Aorta (tissue), 5 donors: ENCODE measurements at regions of chr6 and their contacts with region 1.

Region 1: GRCh38 chr6:163413345-163414116 is 987 bp upstream of the QKI start:
- DNase-seq: peak; percentile 92 to 96
- ATAC-seq: peak; percentile 95
- H3K4me3 ChIP-seq: peak overlapping the region; percentile 14 to 87
- H3K27ac ChIP-seq: peak overlapping the region; percentile 60 to 99
- H3K4me1 ChIP-seq: no peaks in the 10 kb centered on the region
- H3K27me3 ChIP-seq: no peaks in the 10 kb centered on the region

Region 2: DNA sequence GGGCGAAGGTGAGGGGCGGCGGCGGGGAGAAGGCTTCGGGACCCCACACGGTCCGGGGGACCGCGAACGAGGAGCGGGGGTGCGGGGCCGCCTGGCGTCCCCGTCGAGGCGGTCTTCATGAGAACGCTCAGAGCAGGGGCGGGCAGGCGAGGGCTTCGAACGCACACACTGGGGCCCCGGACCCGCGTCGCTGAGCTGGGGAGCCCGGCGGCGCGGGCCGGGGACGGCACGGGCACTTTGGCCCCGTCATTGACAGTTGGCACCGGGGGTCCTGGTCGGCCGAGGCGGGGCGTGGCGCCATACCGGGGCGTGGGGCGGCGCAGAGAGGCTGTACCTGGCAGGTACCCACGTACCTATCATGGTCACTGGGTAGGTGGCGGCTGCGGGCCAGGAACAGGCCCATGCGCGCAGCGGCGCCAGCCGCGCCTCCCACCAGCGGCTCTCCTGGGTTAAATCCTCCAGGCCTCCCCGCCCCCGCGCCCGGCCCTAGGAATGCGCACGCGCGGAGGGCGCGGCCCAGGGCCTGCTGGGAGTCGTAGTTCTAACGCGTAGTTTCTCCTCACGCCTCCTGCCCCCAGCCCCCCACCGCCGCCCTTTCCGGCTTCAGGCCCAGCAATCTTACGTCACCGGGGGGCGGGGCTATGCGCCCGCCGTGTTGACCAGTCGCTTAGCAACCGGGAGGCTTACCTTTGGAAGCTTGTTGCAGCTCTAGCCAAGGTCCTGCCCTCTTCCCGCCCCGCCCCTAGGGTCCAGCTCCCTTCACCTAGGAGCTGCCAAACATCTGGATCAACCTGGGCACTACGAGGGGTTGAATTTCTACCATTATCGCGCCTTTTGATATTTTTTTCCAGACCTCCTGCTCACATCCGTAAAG is 686.0 kb before region 1 on chr6 and contains the starts of genes PACRG and PRKN:
- intact Hi-C with region 1: loop called in 1 of 2 experiments (anchors 10 kb)
- DNase-seq: peak; percentile 99 to 100
- ATAC-seq: peak; percentile 100
- H3K4me3 ChIP-seq: peak within 1 kb of the TSS; percentile 58 to 79
- H3K27ac ChIP-seq: no peak within 1 kb of the TSS
- H3K4me1 ChIP-seq: no peaks in the 10 kb centered on the region
- H3K27me3 ChIP-seq: no peaks in the 10 kb centered on the region
- total RNA-seq, gene PACRG: 0.26 to 0.54 TPM
- total RNA-seq, gene PRKN: 9.0 to 17.3 TPM

Region 3: GRCh38 chr6:163180874-163181541 is 232.5 kb before region 1 on chr6:
- intact Hi-C with region 1: loop called in 1 of 2 experiments (anchors 10 kb)
- DNase-seq: peak in 1 of 2 donors; percentile 82
- ATAC-seq: peak; percentile 64
- H3K4me3 ChIP-seq: no peak overlapping the region
- H3K27ac ChIP-seq: no peak overlapping the region
- H3K4me1 ChIP-seq: no peaks in the 10 kb centered on the region
- H3K27me3 ChIP-seq: no peaks in the 10 kb centered on the region

Region 4: DNA sequence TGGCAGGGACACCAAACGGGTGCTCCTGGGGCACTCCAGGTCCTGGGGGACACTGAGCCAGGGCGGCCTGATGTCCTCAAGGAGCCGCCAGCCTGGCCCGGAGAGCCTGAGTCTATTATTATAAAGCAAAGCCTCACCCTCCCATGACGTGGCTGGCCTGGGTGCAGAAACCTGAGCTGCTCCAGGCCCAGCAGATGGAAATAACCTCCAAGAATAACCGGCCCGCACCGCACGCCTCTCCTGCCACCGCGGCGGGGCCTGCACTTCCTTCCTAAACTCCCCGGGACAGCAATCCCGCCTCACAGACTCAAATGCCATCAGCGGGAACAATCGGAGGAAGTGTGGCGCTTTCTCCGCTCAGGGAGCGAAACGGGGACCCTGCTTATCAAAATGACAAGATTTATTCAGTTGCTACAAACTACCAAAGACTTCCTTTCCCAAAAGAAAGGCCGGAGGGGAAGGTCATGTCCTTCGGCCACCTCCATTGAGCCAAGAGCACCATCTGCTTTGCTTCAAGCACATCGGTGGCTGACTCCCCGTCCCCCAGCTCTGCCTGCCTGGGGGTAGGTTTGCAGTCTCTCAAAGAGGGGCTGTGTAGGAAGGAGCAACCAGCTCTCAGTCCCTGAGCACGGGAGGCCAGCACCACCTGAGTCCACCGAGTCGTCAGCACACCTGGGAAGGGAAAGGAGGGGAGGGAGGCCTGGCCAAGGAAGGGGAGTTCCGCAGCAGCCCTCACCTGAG is 77.7 kb before region 1 on chr6:
- intact Hi-C with region 1: loop called in 1 of 2 experiments (anchors 1 kb)
- DNase-seq: peak; percentile 87 to 88
- ATAC-seq: peak; percentile 87
- H3K4me3 ChIP-seq: no peak overlapping the region
- H3K27ac ChIP-seq: peak overlapping the region in 1 of 2 donors; percentile 69
- H3K4me1 ChIP-seq: no peaks in the 10 kb centered on the region
- H3K27me3 ChIP-seq: no peaks in the 10 kb centered on the region

Region 5: DNA sequence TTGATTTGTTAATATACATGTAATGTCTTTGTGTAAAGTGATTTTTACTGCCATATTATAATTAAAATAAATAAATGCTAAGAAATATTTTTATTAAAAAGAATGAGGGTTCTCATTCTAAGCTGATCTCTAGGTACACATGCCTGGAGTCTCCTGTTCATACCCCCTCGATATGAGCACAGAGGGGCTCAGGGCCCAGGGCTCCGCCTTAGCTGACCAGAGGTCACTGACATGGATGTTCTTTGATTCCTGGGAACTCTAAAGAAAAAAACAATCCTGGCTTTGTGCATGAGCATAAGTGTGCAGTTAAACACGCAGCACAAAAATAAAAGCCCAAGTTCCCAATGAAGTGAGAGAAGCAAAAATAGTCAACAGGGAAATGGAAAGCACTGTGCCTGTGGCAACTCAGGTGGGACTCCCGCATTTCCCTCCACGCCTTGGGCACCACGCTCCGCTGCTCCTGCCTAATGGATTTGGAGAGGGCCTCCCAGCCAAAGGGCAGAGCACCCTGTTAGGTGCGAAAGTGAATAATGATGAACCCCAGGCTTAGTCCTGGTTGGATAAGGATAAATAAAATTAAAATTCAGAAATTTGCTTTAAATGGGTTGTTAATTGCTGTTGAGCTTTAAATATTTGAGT is 32.3 kb before region 1 on chr6:
- intact Hi-C with region 1: no loop called
- DNase-seq: no peak
- ATAC-seq: no peak
- H3K4me3 ChIP-seq: no peak overlapping the region
- H3K27ac ChIP-seq: no peak overlapping the region
- H3K4me1 ChIP-seq: no peaks in the 10 kb centered on the region
- H3K27me3 ChIP-seq: no peaks in the 10 kb centered on the region

Region 6: GRCh38 chr6:163460307-163460782 is 46.8 kb after region 1 on chr6:
- intact Hi-C with region 1: no loop called
- DNase-seq: no peak
- ATAC-seq: peak; percentile 51
- H3K4me3 ChIP-seq: peak overlapping the region; percentile 26 to 46
- H3K27ac ChIP-seq: no peak overlapping the region
- H3K4me1 ChIP-seq: peaks cover 5 to 10% of the 10 kb centered on the region in 2 donors
- H3K27me3 ChIP-seq: no peaks in the 10 kb centered on the region

Region 7: GRCh38 chr6:163533443-163533842 is 119.9 kb after region 1 on chr6:
- intact Hi-C with region 1: loop called in 1 of 2 experiments (anchors 10 kb)
- DNase-seq: no peak
- ATAC-seq: no peak
- H3K4me3 ChIP-seq: no peak overlapping the region
- H3K27ac ChIP-seq: no peak overlapping the region
- H3K4me1 ChIP-seq: peaks cover 3 to 13% of the 10 kb centered on the region in 2 donors
- H3K27me3 ChIP-seq: no peaks in the 10 kb centered on the region

Region 8: DNA sequence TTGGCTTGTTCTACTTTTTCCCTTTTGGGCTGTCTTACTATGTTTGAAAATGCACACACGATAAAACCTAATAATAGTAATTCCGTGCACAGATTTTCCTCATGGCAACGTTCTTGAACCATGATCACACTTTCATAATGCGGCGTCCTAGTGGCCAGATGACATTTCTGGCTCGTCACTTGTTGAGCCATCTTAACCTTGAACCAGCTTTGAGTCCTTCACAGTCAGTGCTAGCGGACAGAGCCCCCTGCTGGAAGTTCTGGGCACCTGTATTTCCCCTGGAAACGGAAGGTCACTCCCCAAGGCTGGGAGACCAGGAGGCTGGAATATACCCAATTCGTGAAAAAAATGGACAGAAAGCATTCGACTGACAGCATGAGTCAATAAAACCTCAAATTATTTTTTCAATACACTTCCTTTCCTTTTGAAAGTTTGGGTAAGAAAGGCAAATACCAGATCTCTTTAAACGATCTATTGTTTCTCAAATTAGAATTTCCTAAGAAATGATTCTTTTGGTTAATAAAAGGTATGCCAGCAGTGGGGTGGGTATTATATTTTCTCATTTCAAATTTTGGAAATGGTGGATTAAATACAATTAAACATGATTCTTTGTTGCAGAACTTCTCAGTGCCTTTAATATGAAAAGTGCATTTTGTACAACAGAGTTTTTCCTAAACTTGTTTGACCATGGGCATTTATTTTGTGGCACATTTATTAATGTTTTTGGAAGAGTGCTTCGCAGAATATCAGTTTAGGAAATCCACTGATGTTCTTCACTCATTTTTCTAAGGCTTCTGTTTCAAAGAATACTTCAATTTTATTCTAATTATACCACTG is 543.3 kb after region 1 on chr6:
- intact Hi-C with region 1: loop called in 1 of 2 experiments (anchors 10 kb)
- DNase-seq: peak; percentile 82 to 89
- ATAC-seq: peak; percentile 85
- H3K4me3 ChIP-seq: no peak overlapping the region
- H3K27ac ChIP-seq: no peak overlapping the region
- H3K4me1 ChIP-seq: no peaks in the 10 kb centered on the region
- H3K27me3 ChIP-seq: no peaks in the 10 kb centered on the region

Region 9: GRCh38 chr6:164085091-164086075 is 671.9 kb after region 1 on chr6:
- intact Hi-C with region 1: loop called in 1 of 2 experiments (anchors 5 kb)
- DNase-seq: peak; percentile 92
- ATAC-seq: peak; percentile 94
- H3K4me3 ChIP-seq: no peak overlapping the region
- H3K27ac ChIP-seq: peak overlapping the region; percentile 95 to 98
- H3K4me1 ChIP-seq: no peaks in the 10 kb centered on the region
- H3K27me3 ChIP-seq: no peaks in the 10 kb centered on the region